HEK293 (cell line): ENCODE measurements at regions of chr2 and their contacts with region 1.

Region 1: GRCh38 chr2:205259121-205259520 is 423.2 kb upstream of the NRP2 start:
- H3K4me3 ChIP-seq: no peak overlapping the region
- H3K27ac ChIP-seq: no peak overlapping the region
- H3K4me1 ChIP-seq: no peaks in the 10 kb centered on the region
- CTCF ChIP-seq: no peak

Region 2: GRCh38 chr2:205462681-205463345 is 203.7 kb after region 1 on chr2:
- CTCF ChIA-PET with region 1: interaction called, 12 read pairs
- POLR2A ChIA-PET with region 1: no interaction called
- H3K4me3 ChIP-seq: no peak overlapping the region
- H3K27ac ChIP-seq: no peak overlapping the region
- H3K4me1 ChIP-seq: no peaks in the 10 kb centered on the region
- CTCF ChIP-seq: no peak